ENCODE measurements at regions of chr3 and their contacts with region 1.

Region 1: GRCh38 chr3:100254168-100254777 is 6.5 kb upstream of the TBC1D23 start:
- DNase-seq: peak; percentile 47
- H3K27ac ChIP-seq: no peak overlapping the region
- CTCF ChIP-seq: peak; percentile 77

Region 2: GRCh38 chr3:99833617-99834205 is 420.6 kb before region 1 on chr3:
- CTCF ChIA-PET with region 1: interaction called, 18 read pairs
- POLR2A ChIA-PET with region 1: no interaction called
- DNase-seq: no peak
- H3K27ac ChIP-seq: no peak overlapping the region
- CTCF ChIP-seq: no peak

Region 3: GRCh38 chr3:99842826-99843589 is 411.3 kb before region 1 on chr3:
- CTCF ChIA-PET with region 1: interaction called, 10 read pairs
- POLR2A ChIA-PET with region 1: no interaction called
- DNase-seq: peak; percentile 48
- H3K27ac ChIP-seq: no peak overlapping the region
- CTCF ChIP-seq: peak; percentile 72

Region 4: GRCh38 chr3:100277255-100277800 is 23.1 kb after region 1 on chr3:
- CTCF ChIA-PET with region 1: no interaction called
- POLR2A ChIA-PET with region 1: no interaction called
- DNase-seq: no peak
- H3K27ac ChIP-seq: no peak overlapping the region
- CTCF ChIP-seq: no peak

Measured in RWPE1 (cell line).